Spleen (tissue), 13 donors: ENCODE measurements at regions of chr12 and their contacts with region 1.

Region 1: DNA sequence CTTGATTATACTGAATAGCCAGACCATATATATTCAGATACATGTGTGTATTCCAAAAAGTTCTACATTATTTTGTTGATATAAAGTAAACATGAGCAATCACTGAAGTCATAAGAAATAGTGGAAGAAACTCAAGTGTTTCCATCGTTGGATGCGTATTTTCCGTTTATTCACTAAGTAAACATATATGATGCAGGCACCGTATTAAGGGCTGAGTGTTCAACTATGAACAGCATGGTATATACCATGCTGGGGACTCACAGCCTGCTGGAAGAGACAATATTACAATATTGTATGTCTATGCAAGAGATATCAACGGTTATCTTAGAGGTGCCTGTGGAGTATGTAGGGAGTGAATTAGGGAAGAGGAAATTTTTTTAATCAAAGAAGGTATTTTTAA is 1.2 kb downstream of the PYROXD1 start:
- DNase-seq: no peak
- H3K4me3 ChIP-seq: peak overlapping the region in 7 of 8 donors; percentile 60 to 78 (median 72)
- H3K27ac ChIP-seq: peak overlapping the region in 5 of 8 donors; percentile 84 to 92 (median 90)
- H3K4me1 ChIP-seq: peaks cover 0 to 47% (median 30%) of the 10 kb centered on the region in 6 donors
- H3K27me3 ChIP-seq: no peaks in the 10 kb centered on the region
- CTCF ChIP-seq: no peak
- POLR2A ChIP-seq: no peak

Region 2: DNA sequence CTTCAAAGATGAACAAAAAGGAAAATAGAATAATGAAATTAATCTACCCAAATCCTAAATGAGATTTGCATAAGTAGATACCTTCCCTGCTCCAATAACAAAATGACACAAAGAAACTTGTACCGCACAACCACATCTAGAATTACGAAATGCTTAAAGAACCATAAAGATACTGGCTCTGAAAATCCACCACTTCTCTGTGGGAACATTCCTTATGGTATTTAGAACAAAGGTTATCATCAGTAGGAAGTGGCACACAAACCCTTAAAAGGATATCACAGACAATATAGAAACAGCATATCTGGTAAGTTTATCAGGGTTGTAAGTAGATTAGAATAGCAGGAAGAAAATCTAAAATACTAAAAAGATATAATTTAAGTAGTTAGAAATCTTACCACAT is 54.4 kb before region 1 on chr12:
- intact Hi-C with region 1: no loop called
- DNase-seq: no peak
- H3K4me3 ChIP-seq: no peak overlapping the region
- H3K27ac ChIP-seq: no peak overlapping the region
- H3K4me1 ChIP-seq: no peaks in the 10 kb centered on the region
- H3K27me3 ChIP-seq: no peaks in the 10 kb centered on the region
- CTCF ChIP-seq: no peak
- POLR2A ChIP-seq: no peak

Region 3: GRCh38 chr12:21499765-21500164 is 61.1 kb after region 1 on chr12:
- intact Hi-C with region 1: loop called (anchors 10 kb)
- DNase-seq: no peak
- H3K4me3 ChIP-seq: peak overlapping the region in 2 of 8 donors; percentile 88 to 90
- H3K27ac ChIP-seq: no peak overlapping the region
- H3K4me1 ChIP-seq: peaks cover 34 to 64% (median 52%) of the 10 kb centered on the region in 6 donors
- H3K27me3 ChIP-seq: no peaks in the 10 kb centered on the region
- CTCF ChIP-seq: no peak
- POLR2A ChIP-seq: no peak